ENCODE measurements at regions of chr1 and their contacts with region 1.

Region 1: GRCh38 chr1:168401341-168401740 is 120.7 kb downstream of the TBX19 start:
- DNase-seq: no peak
- H3K4me3 ChIP-seq: no peak overlapping the region
- H3K4me3 Mint-ChIP-seq: no peak overlapping the region
- H3K27ac ChIP-seq: no peak overlapping the region
- H3K27ac Mint-ChIP-seq: no peak overlapping the region
- H3K4me1 ChIP-seq: peaks cover 12% of the 10 kb centered on the region
- H3K4me1 Mint-ChIP-seq: peaks cover 10 to 18% (median 13%) of the 10 kb centered on the region in 3 donors
- H3K27me3 ChIP-seq: no peaks in the 10 kb centered on the region
- H3K27me3 Mint-ChIP-seq: peaks cover 0 to 5% of the 10 kb centered on the region in 2 donors

Region 2: GRCh38 chr1:168386949-168387586 is 14.3 kb before region 1 on chr1:
- CTCF ChIA-PET with region 1: interaction called, 3 read pairs
- POLR2A ChIA-PET with region 1: interaction called, 10 read pairs
- DNase-seq: peak; percentile 64 to 88 (median 73)
- H3K4me3 ChIP-seq: no peak overlapping the region
- H3K4me3 Mint-ChIP-seq: peak overlapping the region; percentile 26 to 80 (median 76)
- H3K27ac ChIP-seq: peak overlapping the region; percentile 10
- H3K27ac Mint-ChIP-seq: peak overlapping the region; percentile 78 to 99 (median 94)
- H3K4me1 ChIP-seq: peaks cover 27% of the 10 kb centered on the region
- H3K4me1 Mint-ChIP-seq: peaks cover 30 to 36% (median 33%) of the 10 kb centered on the region in 3 donors
- H3K27me3 ChIP-seq: no peaks in the 10 kb centered on the region
- H3K27me3 Mint-ChIP-seq: peaks cover 0 to 7% of the 10 kb centered on the region in 2 donors

Measured in CD8-positive, alpha-beta memory T cell (primary cell).